ENCODE measurements at regions of chr7 and their contacts with region 1.

Region 1: DNA sequence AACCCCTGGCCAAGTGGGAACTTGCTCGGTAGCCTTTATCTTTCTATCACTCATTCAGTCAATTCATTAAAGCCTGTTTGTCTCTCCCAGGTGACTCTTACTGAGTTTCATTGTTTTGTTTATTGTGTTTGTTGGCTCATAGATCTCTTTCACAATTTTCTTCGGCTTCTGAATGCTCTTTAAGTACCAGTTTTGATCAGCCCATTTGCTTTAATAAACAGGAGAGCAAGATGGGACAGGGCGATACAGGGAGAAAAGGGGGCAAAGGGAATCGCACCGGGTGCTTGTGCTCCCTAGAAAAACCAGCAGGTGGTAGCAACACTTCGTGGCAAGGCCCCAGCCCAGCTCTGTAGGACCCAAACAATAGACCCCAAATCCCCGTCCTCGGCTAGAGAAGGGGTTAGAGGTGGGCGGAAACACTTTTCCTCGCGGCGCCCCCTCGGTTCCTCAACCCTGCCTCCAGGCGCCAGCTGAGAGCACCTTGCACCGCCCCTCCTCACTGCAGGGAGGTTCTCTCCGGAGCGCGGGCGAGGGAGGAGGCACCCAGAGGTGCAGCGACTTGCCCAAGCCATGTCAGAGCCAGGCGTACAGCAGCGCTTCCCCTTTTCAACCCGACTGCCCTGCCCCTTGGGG is 1.0 kb upstream of the EPHB6 start:
- DNase-seq: peak; percentile 35
- ATAC-seq: peak; percentile 77
- H3K4me3 ChIP-seq: peak overlapping the region; percentile 76
- H3K27ac ChIP-seq: peak overlapping the region; percentile 68; the same call in 1 of the 2 replicates
- H3K4me1 ChIP-seq: peaks cover 8 to 16% of the 10 kb centered on the region in 2 experiments; a peak in 3 of 4 replicates
- H3K27me3 ChIP-seq: no peaks in the 10 kb centered on the region
- CTCF ChIP-seq: peak; percentile 74 to 85 (median 79); a peak in 5 of 6 replicates
- POLR2A ChIP-seq: no peak
- RAD21 ChIP-seq: peak; percentile 84

Region 2: GRCh38 chr7:142833174-142834048 is 20.4 kb before region 1 on chr7:
- CTCF ChIA-PET with region 1: no interaction called
- POLR2A ChIA-PET with region 1: no interaction called
- RAD21 ChIA-PET with region 1: no interaction called
- intact Hi-C with region 1: no loop called
- DNase-seq: no peak
- ATAC-seq: peak; percentile 53; the same call in 1 of the 2 replicates
- H3K4me3 ChIP-seq: no peak overlapping the region
- H3K27ac ChIP-seq: no peak overlapping the region
- H3K4me1 ChIP-seq: peaks cover 0 to 3% of the 10 kb centered on the region in 2 experiments; a peak in 1 of 4 replicates
- H3K27me3 ChIP-seq: no peaks in the 10 kb centered on the region
- CTCF ChIP-seq: no peak
- POLR2A ChIP-seq: no peak
- RAD21 ChIP-seq: no peak

Region 3: GRCh38 chr7:142866361-142867058 is 12.7 kb after region 1 on chr7:
- CTCF ChIA-PET with region 1: interaction called, 5 read pairs
- POLR2A ChIA-PET with region 1: no interaction called
- RAD21 ChIA-PET with region 1: interaction called in 1 of 2 experiments, 3 read pairs
- intact Hi-C with region 1: loop called (anchors 1 kb)
- DNase-seq: no peak
- ATAC-seq: peak; percentile 96
- H3K4me3 ChIP-seq: no peak overlapping the region
- H3K27ac ChIP-seq: no peak overlapping the region
- H3K4me1 ChIP-seq: no peaks in the 10 kb centered on the region
- H3K27me3 ChIP-seq: no peaks in the 10 kb centered on the region
- CTCF ChIP-seq: peak; percentile 66 to 75 (median 74); a peak in 5 of 6 replicates
- POLR2A ChIP-seq: no peak
- RAD21 ChIP-seq: peak; percentile 66

Region 4: GRCh38 chr7:142873281-142873787 is 19.5 kb after region 1 on chr7:
- CTCF ChIA-PET with region 1: interaction called, 10 read pairs
- POLR2A ChIA-PET with region 1: no interaction called
- RAD21 ChIA-PET with region 1: no interaction called
- intact Hi-C with region 1: no loop called
- DNase-seq: peak; percentile 28
- ATAC-seq: peak; percentile 94
- H3K4me3 ChIP-seq: no peak overlapping the region
- H3K27ac ChIP-seq: no peak overlapping the region
- H3K4me1 ChIP-seq: no peaks in the 10 kb centered on the region
- H3K27me3 ChIP-seq: no peaks in the 10 kb centered on the region
- CTCF ChIP-seq: peak; percentile 76 to 93 (median 90)
- POLR2A ChIP-seq: no peak
- RAD21 ChIP-seq: peak; percentile 40; the same call in 1 of the 2 replicates

Region 5: GRCh38 chr7:143073556-143073955 is 219.7 kb after region 1 on chr7:
- CTCF ChIA-PET with region 1: no interaction called
- POLR2A ChIA-PET with region 1: no interaction called
- RAD21 ChIA-PET with region 1: no interaction called
- intact Hi-C with region 1: no loop called
- DNase-seq: no peak
- ATAC-seq: no peak
- H3K4me3 ChIP-seq: no peak overlapping the region
- H3K27ac ChIP-seq: no peak overlapping the region
- H3K4me1 ChIP-seq: no peaks in the 10 kb centered on the region
- H3K27me3 ChIP-seq: peaks cover 14% of the 10 kb centered on the region; the same call in 1 of the 2 replicates
- CTCF ChIP-seq: no peak
- POLR2A ChIP-seq: no peak
- RAD21 ChIP-seq: no peak

Region 6: GRCh38 chr7:143355450-143356385 is 501.9 kb after region 1 on chr7:
- CTCF ChIA-PET with region 1: no interaction called
- POLR2A ChIA-PET with region 1: no interaction called
- RAD21 ChIA-PET with region 1: no interaction called
- intact Hi-C with region 1: no loop called
- DNase-seq: no peak
- ATAC-seq: peak; percentile 69
- H3K4me3 ChIP-seq: no peak overlapping the region
- H3K27ac ChIP-seq: no peak overlapping the region
- H3K4me1 ChIP-seq: no peaks in the 10 kb centered on the region
- H3K27me3 ChIP-seq: no peaks in the 10 kb centered on the region
- CTCF ChIP-seq: peak in 2 of 3 experiments; percentile 12 to 14; a peak in 2 of 6 replicates
- POLR2A ChIP-seq: no peak
- RAD21 ChIP-seq: no peak

Measured in HCT116 (cell line).